Head of caudate nucleus (tissue), 42 donors: ENCODE measurements at regions of chr1 and their contacts with region 1.

Region 1: GRCh38 chr1:44029906-44030604 is 1.2 kb downstream of the SLC6A9 start:
- DNase-seq: peak; percentile 76 to 95 (median 91)

Region 2: DNA sequence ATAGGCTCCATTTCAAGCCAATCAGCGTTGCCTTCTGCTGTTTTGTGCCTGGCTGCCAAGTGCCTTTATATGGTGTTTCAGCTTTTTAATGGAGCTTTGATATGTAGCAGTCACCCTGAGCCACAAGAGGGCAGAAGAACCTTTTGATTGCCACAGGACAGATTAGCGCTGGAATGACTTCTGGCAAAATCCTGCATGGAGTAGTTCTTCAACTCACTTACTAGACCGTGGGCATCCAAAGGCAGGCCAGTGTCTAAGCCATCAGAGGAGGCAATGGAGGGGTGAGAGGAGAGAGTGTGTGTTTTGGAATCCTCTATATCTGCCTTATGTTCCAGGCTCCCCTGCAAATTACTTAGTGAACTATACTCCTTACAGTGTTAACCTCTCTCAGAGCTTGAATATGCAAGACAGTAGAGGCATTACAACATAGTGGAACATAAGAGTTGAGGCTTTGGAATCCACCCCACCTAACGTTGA is 266.5 kb before region 1 on chr1:
- intact Hi-C with region 1: loop called (anchors 10 kb)
- DNase-seq: peak in 41 of 42 donors; percentile 36 to 91 (median 80)

Region 3: GRCh38 chr1:43934101-43934985 is 95.7 kb before region 1 on chr1:
- intact Hi-C with region 1: loop called (anchors 10 kb)
- DNase-seq: peak in 40 of 42 donors; percentile 46 to 89 (median 70)

Region 4: DNA sequence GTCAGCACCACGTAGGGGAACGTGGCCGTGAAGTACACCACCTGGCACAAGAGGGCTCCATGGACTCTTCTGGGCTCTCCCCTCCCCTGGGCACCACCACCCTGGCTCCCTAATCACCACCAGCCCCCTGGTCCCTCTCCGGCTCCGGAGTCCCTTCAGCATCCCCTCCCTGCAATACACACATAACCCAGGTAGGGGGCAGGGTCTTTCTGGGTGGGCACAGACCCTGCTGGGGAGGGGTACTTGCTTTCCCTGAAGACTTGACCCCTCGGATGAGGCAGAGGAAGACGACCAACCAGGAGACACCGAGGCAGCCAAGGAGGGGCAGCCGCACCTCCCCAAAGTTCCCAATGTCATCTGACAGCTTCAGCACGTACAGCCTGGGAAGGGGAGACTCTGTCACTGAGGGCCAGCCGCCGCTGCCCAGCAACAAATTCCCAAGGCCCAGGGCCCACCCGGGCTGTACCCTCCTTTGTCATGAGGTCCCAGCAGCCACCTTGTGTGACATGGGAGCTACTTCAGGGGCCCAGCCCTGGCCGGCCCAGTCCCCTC is 27.4 kb before region 1 on chr1:
- intact Hi-C with region 1: loop called (anchors 1 kb)
- DNase-seq: no peak

Region 5: DNA sequence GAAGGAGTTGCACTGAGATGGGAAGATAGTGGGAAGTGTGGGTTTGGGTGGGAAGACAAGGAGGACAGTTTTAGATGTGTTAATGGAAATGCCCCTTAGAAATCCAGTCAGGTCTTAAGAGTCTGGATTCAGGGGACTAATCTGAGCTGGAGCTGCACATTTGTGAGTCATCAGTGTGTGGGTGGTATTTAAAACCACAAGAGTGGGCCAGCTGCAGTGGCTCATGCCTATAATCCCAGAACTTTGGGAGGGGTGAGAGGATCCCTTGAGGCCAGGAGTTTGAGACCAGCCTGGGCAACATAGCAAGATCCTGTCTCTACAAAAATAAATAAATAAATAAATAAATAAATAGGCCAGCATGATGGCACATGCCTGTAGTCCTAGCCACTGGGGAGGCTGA is 42.1 kb after region 1 on chr1:
- intact Hi-C with region 1: no loop called
- DNase-seq: peak in 7 of 42 donors; percentile 11 to 54 (median 27)

Region 6: GRCh38 chr1:44084998-44085675 is 55.1 kb after region 1 on chr1:
- intact Hi-C with region 1: no loop called
- DNase-seq: no peak